AG04449 (cell line): ENCODE measurements at regions of chr9 and their contacts with region 1.

Region 1: GRCh38 chr9:35096035-35096849 is at the start of gene PIGO:
- DNase-seq: no peak
- H3K4me3 ChIP-seq: peak within 1 kb of the TSS; percentile 99
- CTCF ChIP-seq: peak; percentile 97

Region 2: GRCh38 chr9:34701769-34702736 is 394.2 kb before region 1 on chr9:
- CTCF ChIA-PET with region 1: no interaction called
- POLR2A ChIA-PET with region 1: no interaction called
- DNase-seq: peak; percentile 16
- H3K4me3 ChIP-seq: peak overlapping the region; percentile 62
- CTCF ChIP-seq: peak; percentile 99

Region 3: DNA sequence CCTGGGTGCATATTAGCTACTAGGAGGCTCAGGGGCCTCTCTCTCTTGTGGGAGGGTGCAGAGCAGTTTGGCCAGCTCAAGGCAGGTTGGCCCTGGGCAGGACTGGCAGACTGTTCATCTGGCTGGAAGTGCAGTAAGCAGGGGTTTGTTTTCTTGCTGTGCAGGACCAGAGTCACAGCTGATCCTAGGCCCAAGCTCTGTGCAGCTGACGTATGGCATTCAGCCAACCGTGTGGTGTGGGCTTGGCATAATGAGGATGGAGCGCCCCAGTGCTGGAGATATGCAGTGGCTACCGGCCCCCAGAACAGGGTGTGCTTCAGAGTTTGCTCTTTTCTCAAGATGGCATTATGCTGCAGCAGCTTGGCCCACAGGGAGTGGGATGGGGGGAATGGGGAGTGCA is 169.2 kb before region 1 on chr9:
- CTCF ChIA-PET with region 1: no interaction called
- POLR2A ChIA-PET with region 1: no interaction called
- DNase-seq: no peak
- H3K4me3 ChIP-seq: no peak overlapping the region
- CTCF ChIP-seq: no peak

Region 4: GRCh38 chr9:35029852-35030251 is 66.4 kb before region 1 on chr9:
- CTCF ChIA-PET with region 1: no interaction called
- POLR2A ChIA-PET with region 1: no interaction called
- DNase-seq: no peak
- H3K4me3 ChIP-seq: no peak overlapping the region
- CTCF ChIP-seq: no peak

Region 5: GRCh38 chr9:35051069-35051967 is 44.9 kb before region 1 on chr9:
- CTCF ChIA-PET with region 1: interaction called, 17 read pairs
- POLR2A ChIA-PET with region 1: no interaction called
- DNase-seq: no peak
- H3K4me3 ChIP-seq: no peak overlapping the region
- CTCF ChIP-seq: peak; percentile 65

Region 6: GRCh38 chr9:35071814-35072460 is 24.3 kb before region 1 on chr9:
- CTCF ChIA-PET with region 1: interaction called, 127 read pairs
- POLR2A ChIA-PET with region 1: interaction called, 11 read pairs
- DNase-seq: no peak
- H3K4me3 ChIP-seq: peak overlapping the region; percentile 94
- CTCF ChIP-seq: peak; percentile 40

Region 7: DNA sequence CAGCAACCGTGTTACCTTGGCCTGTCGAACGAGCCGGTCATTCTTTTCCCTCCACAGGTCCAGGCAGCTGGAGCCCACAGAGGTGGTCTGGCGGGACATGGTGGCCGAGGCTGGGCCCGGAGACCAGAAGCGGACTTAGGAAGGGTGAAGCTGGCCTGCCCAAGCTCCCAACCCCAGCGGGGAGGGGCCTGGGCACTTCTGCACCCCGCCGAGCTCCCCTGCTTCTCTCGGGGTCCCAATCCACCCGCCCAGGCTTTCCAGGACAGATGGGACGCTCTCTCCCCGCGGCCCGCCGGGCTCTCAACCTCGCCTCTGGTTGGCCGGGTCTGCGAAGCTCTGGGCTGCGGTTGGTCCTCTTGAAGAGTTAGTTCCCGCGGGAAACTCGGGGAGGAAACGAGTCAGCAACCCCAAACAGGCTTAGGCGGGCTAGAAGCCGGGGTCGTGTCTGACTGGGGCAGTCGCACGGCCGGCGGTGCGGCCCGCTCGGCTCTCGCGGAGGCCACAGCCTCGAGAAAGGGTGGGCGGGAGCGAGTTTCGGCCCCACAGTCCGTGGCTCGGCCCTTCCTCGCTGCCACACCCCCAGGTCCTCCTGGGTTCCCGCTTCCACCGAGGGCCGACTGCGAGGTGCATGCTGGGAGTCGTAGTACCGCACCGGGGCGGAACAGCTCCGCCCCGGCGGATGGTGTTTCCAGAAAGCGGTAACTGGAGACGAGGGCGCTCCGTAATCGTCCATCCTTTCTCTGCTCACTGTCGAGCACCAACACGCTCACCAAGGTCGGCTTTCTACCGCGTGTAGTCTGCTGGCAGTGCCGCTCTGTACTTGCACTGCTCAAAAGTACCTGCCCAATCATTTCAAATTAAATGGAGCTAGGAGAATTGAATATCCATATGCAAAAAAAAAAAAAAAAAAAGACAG is 16.6 kb before region 1 on chr9 and contains the start of gene FANCG:
- CTCF ChIA-PET with region 1: interaction called, 127 read pairs
- POLR2A ChIA-PET with region 1: interaction called, 8 read pairs
- DNase-seq: peak; percentile 57
- H3K4me3 ChIP-seq: peak within 1 kb of the TSS; percentile 89
- CTCF ChIP-seq: no peak

Region 8: GRCh38 chr9:35085078-35085477 is 11.2 kb before region 1 on chr9:
- CTCF ChIA-PET with region 1: interaction called, 127 read pairs
- POLR2A ChIA-PET with region 1: interaction called, 8 read pairs
- DNase-seq: no peak
- H3K4me3 ChIP-seq: no peak overlapping the region
- CTCF ChIP-seq: no peak

Region 9: DNA sequence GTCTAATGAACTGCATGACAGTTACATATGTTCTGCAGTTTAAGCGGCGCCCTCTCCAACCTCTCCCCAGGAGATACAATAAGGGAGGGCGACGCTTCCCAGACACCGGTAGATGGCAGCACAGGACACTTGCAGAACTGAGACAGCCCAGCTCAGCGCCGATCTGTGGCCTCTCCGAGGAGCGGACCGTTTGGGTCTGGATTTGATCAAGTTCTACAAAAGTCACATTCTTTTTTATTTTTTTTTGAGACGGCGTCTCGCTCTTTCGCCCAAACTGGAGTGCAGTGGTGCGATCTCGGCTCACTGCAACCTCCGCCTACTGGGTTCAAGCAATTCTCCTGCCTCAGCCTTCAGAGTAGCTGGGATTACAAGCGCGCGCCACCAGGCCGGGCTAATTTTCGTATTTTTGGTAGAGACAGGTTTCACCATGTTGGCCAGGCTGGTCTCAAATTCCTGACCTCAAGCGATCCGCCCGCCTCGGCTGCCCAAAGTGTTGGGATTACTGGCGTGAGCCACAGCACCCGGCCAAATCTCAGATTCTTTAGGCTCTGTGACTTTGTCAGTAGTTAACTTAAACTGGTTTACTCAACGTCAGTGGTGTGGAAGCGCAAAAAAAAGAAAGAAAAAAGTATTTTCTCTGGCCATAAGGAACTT is 20.8 kb after region 1 on chr9:
- CTCF ChIA-PET with region 1: interaction called, 162 read pairs
- POLR2A ChIA-PET with region 1: no interaction called
- DNase-seq: peak; percentile 63
- H3K4me3 ChIP-seq: peak overlapping the region; percentile 99
- CTCF ChIP-seq: peak; percentile 98

Region 10: DNA sequence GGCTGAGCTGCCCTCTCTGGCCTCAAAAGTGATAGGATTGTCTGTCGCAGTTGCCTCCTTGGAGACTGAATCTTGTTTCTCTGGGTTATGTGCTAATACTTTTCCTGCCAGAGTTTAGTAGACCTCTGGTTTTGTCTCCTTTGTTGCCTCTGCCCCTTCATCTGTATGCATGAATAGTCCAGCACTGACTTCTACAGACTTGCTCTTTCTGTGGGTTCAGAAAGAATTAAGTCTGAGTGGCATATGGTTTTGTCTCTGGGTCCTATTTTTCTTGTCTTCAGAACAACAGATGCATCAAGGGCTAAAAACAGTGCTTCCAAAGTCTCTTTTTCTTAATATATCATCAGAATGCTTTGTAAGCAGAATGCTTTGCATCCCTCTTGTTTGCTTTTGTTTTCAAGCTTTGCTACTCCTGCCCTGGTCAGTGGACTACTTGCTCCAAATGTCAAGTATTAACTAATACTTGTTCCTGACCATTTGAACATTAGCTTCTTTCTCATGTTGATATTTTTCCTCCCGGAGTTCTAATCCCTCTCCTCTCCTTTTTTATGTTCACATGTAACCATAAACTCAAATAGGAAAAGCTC is 197.2 kb after region 1 on chr9:
- CTCF ChIA-PET with region 1: no interaction called
- POLR2A ChIA-PET with region 1: no interaction called
- DNase-seq: no peak
- H3K4me3 ChIP-seq: no peak overlapping the region
- CTCF ChIP-seq: no peak

Region 11: DNA sequence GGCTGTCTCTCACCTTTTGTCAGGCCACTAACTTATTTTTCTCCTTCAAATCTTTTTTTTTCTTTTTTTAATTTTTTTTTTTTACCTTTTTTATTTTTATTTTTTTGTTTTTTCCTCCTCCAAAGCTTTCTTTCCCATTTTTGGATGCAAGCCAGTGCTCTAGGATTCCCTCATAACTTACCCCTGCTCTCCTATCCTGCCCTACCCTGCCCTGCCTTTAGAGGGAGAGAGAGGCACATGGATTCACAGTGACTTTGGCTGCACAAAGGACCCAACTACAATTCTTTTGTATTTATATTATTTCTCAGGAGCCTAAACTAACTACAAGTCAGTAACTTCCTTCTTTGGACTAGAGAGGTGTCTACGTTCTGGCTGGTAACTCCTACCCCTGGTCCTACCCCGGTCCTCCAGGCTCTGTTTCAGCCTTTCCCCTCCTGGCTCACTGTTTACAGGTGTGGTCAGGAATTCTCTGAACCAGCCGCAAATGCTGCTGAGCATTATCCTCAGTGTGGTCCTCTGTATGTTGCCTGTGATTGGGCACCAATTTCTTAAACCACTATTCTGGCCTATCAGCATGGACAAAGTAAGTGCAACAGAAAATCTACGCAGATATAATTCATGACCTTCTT is 385.2 kb after region 1 on chr9:
- CTCF ChIA-PET with region 1: interaction called, 49 read pairs
- POLR2A ChIA-PET with region 1: no interaction called
- DNase-seq: no peak
- H3K4me3 ChIP-seq: no peak overlapping the region
- CTCF ChIP-seq: peak; percentile 74